ENCODE measurements at regions of chr9 and their contacts with region 1.

Region 1: DNA sequence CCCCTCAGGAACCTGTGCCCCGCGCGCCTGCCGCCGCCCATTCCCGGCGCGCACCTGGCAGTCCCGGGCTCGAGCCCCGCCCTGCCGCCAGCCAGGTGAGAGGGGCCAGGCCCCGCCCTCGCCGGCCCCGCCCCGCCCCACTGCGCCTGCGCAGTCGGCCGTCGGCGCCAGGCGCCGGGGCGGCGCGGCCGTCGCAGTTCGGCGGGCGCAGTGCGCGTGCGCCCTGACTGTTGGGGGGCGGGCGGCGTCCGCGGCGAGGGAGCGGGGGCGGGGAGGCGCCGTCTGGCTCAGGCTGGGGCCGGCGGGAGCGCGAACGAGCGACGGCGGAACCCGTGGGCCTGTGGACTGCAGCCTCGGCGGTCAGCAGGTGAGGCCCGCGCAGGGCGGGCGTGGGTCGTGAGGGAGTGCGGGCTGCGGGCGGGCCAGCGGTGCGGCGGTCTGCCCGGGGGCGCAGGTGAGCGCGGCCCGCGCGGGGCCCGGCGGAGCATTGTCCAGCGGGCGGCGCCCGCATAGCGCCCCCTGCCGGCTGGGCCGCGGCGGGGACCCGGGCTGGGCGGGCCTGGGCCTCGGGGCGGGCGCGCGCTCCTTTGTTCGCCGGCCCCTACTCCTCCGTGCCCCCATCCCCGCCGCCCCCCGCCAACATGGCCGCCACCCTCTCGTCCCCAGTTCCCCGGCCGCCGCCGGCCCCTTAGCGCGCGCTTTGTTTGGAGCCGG is at the start of gene SPIN1:
- DNase-seq: peak; percentile 78
- H3K4me3 Mint-ChIP-seq: peak within 1 kb of the TSS; percentile 85
- H3K27ac Mint-ChIP-seq: peak within 1 kb of the TSS; percentile 91
- H3K4me1 Mint-ChIP-seq: peaks cover 31% of the 10 kb centered on the region
- H3K27me3 Mint-ChIP-seq: no peaks in the 10 kb centered on the region
- total RNA-seq, gene SPIN1: 20.2 to 21.4 TPM

Region 2: DNA sequence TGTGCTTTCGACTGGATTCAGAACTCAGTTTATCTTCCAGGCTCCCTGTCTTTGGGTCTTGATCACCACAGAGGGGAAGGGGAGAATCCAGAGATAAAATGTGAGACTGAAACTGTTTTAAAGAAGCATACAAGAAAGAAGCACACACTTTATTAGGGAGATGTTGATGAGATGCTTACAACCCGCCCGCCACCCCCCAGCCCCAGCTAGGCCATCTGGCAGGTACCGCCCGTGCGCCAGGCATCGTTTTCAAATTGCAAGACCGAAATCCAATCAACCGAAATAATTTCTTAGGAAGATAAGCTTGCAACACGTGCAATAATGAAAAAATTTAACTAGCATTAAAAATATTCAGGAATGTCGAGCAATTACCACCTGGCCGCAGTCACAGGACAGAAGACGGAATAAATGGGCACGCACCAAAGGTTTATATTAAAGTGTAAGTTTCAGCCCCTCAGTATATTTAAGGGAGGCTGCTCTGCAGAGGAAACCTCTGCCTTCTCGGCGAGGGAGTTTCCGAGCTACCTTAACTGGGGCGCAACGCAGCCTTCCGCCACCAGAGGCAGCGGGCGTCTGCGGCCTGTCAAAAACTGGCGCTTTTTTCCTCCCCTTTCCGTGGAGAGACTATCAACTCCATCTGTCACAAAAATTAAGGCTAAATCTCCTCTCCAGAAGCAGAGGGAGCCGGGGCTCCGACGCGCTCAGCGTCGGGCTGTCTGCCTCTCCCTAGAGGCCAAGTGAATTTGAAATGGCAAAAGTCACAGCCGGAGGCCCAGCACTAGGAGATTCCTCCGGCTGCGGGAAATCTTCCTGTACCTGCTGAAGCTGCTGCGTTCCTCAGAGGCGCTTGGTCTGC is 1440.0 kb before region 1 on chr9:
- CTCF ChIA-PET with region 1: no interaction called
- intact Hi-C with region 1: loop called (anchors 5 kb)
- DNase-seq: peak; percentile 82
- H3K4me3 Mint-ChIP-seq: peak overlapping the region; percentile 76
- H3K27ac Mint-ChIP-seq: no peak overlapping the region
- H3K4me1 Mint-ChIP-seq: peaks cover 2% of the 10 kb centered on the region
- H3K27me3 Mint-ChIP-seq: peaks cover 15% of the 10 kb centered on the region

Region 3: DNA sequence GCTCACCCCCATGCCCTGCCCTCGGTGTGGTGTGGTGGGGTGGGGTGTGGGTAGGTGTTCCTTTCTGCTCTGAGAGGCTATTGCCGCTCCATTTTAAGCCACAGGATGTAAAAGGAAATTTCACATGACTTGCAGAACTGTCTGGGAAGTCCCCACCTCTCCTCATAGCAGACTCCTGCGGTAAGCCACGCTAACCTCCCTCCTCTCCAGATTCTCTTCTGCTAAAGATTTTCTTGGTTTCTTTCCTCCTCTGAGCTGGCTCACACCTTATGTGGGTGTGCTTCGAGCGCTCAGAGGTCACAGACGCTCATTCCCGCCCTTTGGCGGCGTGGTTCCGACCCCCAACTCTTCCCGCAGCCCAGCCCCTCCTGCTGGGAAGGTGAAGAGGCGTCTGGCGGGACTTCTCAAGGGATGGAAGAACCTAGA is 381.1 kb before region 1 on chr9:
- CTCF ChIA-PET with region 1: no interaction called
- intact Hi-C with region 1: loop called (anchors 1 kb)
- DNase-seq: peak; percentile 88
- H3K4me3 Mint-ChIP-seq: no peak overlapping the region
- H3K27ac Mint-ChIP-seq: peak overlapping the region; percentile 51
- H3K4me1 Mint-ChIP-seq: peaks cover 12% of the 10 kb centered on the region
- H3K27me3 Mint-ChIP-seq: peaks cover 4% of the 10 kb centered on the region

Region 4: GRCh38 chr9:88202321-88202720 is 186.0 kb before region 1 on chr9:
- CTCF ChIA-PET with region 1: no interaction called
- intact Hi-C with region 1: no loop called
- DNase-seq: no peak
- H3K4me3 Mint-ChIP-seq: no peak overlapping the region
- H3K27ac Mint-ChIP-seq: no peak overlapping the region
- H3K4me1 Mint-ChIP-seq: peaks cover 3% of the 10 kb centered on the region
- H3K27me3 Mint-ChIP-seq: peaks cover 4% of the 10 kb centered on the region

Region 5: DNA sequence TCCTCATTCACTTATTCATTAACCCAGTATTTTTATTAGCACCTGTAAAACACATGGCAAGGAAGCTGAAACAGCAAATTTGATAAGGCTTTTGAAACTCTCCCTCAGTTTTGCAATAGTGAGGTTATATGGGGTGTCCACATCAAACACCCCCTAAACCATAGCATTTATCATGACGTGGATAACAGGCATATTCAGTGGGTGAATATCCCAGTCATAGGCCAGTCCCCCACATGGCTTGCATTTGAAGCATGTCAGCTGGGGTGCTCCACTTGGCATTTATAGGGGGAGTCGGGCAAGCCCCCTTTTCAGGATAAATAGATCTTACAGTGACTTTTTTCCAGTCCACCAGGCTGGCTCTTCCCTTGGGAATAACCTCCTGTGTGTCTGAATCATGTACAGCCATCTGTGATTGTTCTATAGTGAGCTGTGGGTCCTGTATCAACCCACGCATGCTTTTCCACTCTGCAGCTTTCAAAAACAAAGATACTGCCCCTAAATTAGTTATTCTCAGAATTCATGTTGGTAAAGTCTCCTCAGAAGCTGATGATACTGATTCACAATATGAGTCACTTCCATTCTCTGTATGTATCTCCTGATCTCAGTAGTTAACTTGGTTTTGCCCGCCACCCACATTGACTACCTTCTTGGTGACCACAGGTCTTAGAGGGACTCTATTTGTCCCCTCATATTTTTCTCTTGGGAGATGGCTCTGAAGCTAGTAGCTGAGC is 84.4 kb before region 1 on chr9:
- CTCF ChIA-PET with region 1: no interaction called
- intact Hi-C with region 1: loop called (anchors 1 kb)
- DNase-seq: peak; percentile 75
- H3K4me3 Mint-ChIP-seq: no peak overlapping the region
- H3K27ac Mint-ChIP-seq: no peak overlapping the region
- H3K4me1 Mint-ChIP-seq: peaks cover 23% of the 10 kb centered on the region
- H3K27me3 Mint-ChIP-seq: peaks cover 8% of the 10 kb centered on the region

Region 6: GRCh38 chr9:88403340-88403739 is 15.0 kb after region 1 on chr9:
- CTCF ChIA-PET with region 1: no interaction called
- intact Hi-C with region 1: no loop called
- DNase-seq: no peak
- H3K4me3 Mint-ChIP-seq: no peak overlapping the region
- H3K27ac Mint-ChIP-seq: no peak overlapping the region
- H3K4me1 Mint-ChIP-seq: peaks cover 7% of the 10 kb centered on the region
- H3K27me3 Mint-ChIP-seq: no peaks in the 10 kb centered on the region

Region 7: DNA sequence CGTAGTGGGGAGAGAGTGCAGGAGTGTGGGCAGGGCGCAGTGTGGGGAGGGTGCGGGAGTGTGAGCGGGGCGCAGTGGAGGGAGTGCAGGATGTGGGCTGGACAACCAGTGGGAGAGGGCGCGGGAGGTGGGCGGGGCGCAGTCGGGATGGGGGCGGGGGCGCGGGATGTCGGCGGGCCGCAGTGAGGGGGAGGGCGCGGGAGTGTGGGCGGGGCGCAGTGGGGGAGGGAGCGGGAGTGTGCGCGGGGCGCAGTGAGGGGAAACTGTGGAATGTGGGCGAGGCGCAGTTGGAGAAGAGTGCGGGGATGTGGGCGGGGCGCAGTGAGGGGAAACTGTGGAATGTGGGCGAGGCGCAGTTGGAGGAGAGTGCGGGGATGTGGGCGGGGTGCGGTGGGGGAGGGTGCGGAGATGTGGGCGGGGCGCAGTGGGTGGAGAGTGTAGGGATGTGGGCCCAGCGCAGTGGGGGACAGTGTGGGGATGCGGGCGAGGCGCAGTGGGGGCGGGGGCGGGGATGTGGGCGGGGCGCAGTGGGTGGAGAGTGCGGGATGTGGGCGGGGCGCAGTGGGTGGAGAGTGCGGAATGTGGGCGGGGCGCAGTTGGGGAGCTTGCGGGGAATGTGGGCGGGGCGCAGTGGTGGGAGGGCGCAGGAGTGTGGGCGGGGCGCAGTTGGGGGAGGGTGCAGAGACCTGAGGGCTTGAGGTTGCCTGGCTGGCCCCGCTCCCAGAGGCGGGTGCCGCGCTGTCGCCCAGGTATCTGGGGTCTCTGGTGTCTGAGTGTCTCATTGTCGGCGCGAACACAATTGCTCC is 146.3 kb after region 1 on chr9 and contains the start of gene NXNL2:
- CTCF ChIA-PET with region 1: no interaction called
- intact Hi-C with region 1: loop called (anchors 2 kb)
- DNase-seq: peak; percentile 71
- H3K4me3 Mint-ChIP-seq: peak within 1 kb of the TSS; percentile 55
- H3K27ac Mint-ChIP-seq: no peak within 1 kb of the TSS
- H3K4me1 Mint-ChIP-seq: peaks cover 24% of the 10 kb centered on the region
- H3K27me3 Mint-ChIP-seq: peaks cover 32% of the 10 kb centered on the region
- total RNA-seq, gene NXNL2: not detected

Region 8: DNA sequence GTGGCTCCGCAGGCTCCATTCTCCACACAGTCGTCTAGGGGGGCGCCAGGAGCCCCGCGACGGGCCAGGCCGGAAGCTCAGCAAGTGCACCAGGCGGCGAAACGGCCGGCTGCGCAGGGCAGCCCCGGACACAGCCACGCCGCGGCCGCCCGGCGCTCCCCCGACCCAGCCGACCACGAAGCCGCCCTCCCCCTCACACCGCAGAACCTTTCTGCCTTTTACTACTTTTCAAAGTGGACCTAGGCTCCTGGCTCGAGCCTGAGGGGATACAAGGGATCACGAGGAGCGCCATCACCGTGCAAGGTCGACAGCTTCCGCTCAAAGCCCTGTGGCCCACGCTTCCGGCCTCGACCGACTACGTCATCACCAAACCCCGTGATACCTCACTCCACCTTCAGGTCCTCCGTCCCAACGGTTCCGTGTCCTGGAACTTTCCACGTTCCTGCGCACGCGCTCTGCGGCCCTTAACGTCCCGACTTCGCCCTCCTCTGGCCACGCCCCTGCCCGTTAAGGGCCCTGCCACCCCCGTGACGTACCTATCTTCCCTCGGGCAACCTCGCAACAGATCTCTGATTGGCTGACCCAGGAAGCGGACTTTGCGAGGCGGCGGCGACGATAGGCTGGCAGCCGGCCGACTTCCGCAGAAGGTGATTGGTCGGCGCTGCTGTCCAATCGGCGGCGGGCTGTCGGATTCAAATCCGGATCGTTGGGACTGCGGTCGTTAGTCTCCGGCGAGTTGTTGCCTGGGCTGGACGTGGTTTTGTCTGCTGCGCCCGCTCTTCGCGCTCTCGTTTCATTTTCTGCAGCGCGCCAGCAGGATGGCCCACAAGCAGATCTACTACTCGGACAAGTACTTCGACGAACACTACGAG is 922.4 kb after region 1 on chr9 and contains the start of gene CKS2:
- CTCF ChIA-PET with region 1: no interaction called
- intact Hi-C with region 1: loop called (anchors 5 kb)
- DNase-seq: peak; percentile 100
- H3K4me3 Mint-ChIP-seq: peak within 1 kb of the TSS; percentile 96
- H3K27ac Mint-ChIP-seq: peak within 1 kb of the TSS; percentile 98
- H3K4me1 Mint-ChIP-seq: peaks cover 49% of the 10 kb centered on the region
- H3K27me3 Mint-ChIP-seq: no peaks in the 10 kb centered on the region
- total RNA-seq, gene CKS2: 278 to 292 TPM